ENCODE measurements at regions of chr2 and their contacts with region 1.

Region 1: DNA sequence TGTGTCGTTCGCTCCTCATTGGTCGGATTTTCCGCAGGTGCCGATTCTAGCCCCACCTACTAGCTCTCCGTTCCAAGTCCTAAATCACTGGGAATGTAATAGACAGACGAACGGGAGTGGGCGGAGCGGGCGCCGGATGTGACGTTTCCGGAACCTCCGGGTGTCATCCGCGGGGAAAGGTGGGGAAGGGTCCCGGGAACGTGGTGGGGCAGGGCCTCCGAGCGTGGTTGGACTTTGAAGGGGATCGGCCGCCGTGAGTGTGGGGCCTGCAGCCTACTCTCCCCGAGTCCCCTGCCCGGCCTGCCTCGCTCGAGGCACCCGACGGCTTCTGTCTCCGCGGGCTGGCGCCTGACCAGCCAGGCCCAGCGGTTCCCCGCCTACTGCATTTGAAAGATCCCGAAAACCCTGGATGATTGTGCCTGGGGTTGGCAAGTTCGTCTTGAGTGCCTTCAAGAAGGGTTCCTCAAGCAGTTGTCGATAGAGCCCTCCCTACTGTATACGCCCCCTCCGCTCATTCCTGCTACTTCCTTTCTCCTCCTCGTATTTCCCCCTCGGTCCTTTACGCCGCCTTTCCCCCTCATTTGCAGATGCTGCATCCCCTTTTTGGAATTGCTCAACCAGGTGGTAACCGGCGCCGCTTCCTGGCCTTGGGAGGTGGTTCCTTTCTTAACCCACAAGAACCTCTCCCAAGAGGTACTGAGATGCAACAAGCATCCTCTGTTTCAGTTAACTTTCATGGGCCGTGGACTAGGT is at the start of gene STAMBP:
- DNase-seq: peak; percentile 97 to 98
- H3K4me3 ChIP-seq: peak within 1 kb of the TSS; percentile 69 to 89 (median 85)
- H3K27ac ChIP-seq: peak within 1 kb of the TSS; percentile 83 to 87 (median 84)
- H3K4me1 ChIP-seq: peaks cover 11 to 15% of the 10 kb centered on the region in 2 donors
- H3K27me3 ChIP-seq: no peaks in the 10 kb centered on the region
- CTCF ChIP-seq: no peak
- POLR2A ChIP-seq: peak in 1 of 2 donors; percentile 73
- total RNA-seq, gene STAMBP: 31.9 to 45.2 (median 36.6) TPM

Region 2: DNA sequence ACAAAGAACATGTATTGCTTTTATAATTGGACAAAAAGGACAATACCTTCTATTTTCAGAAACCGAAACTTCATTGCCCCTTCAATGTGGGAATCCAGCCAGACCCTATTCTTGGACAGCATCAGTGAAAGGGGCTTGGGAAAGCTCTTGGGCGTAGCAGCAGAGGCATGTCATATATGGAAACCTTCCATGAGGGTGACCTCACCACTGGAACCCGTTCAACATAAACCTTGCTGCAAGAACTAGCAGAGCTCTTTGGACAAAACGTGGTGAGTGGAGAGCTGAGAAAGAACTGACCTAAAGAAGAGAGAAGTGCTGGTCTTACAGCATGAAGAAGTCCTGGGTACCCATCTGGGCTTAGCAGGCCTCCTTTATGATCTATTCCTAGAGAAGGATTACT is 41.1 kb after region 1 on chr2:
- intact Hi-C with region 1: no loop called
- DNase-seq: peak in 1 of 2 donors; percentile 5
- H3K4me3 ChIP-seq: no peak overlapping the region
- H3K27ac ChIP-seq: no peak overlapping the region
- H3K4me1 ChIP-seq: no peaks in the 10 kb centered on the region
- H3K27me3 ChIP-seq: no peaks in the 10 kb centered on the region
- CTCF ChIP-seq: no peak
- POLR2A ChIP-seq: no peak

Region 3: GRCh38 chr2:73985308-73986084 is 156.5 kb after region 1 on chr2:
- intact Hi-C with region 1: loop called (anchors 10 kb)
- DNase-seq: peak; percentile 24 to 46
- H3K4me3 ChIP-seq: peak overlapping the region in 1 of 3 donors; percentile 55
- H3K27ac ChIP-seq: peak overlapping the region in 2 of 3 donors; percentile 58 to 65
- H3K4me1 ChIP-seq: peaks cover 39 to 64% of the 10 kb centered on the region in 2 donors
- H3K27me3 ChIP-seq: no peaks in the 10 kb centered on the region
- CTCF ChIP-seq: no peak
- POLR2A ChIP-seq: peak in 1 of 2 donors; percentile 9

Region 4: GRCh38 chr2:74147727-74148456 is 318.9 kb after region 1 on chr2 and contains the start of gene BOLA3:
- intact Hi-C with region 1: loop called (anchors 10 kb)
- DNase-seq: peak; percentile 84 to 86
- H3K4me3 ChIP-seq: peak within 1 kb of the TSS; percentile 38 to 91 (median 68)
- H3K27ac ChIP-seq: peak within 1 kb of the TSS in 2 of 3 donors; percentile 33 to 36
- H3K4me1 ChIP-seq: peaks cover 16 to 21% of the 10 kb centered on the region in 2 donors
- H3K27me3 ChIP-seq: no peaks in the 10 kb centered on the region
- CTCF ChIP-seq: peak in 4 of 6 experiments; percentile 35 to 76 (median 64)
- POLR2A ChIP-seq: no peak
- total RNA-seq, gene BOLA3: 16.4 to 94.2 (median 78.6) TPM

Region 5: DNA sequence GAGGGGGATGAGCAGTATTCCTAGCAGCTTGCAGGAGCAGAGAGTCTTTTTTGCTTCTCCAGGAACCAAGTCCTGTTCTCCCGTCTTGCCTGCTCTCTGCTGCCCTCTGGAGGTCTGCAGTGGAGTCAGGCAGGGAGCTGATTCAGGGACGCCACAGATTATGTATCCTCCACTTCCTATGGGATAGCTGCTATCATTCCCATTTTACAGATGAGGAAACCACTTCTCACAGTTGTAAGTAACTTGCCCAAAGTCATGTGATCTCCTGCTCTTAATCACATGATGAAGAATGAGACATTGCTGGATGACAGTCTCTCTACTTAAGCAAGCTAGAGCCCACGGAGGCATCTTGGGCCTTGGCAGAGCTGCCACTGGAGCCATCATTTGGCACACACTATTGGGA is 505.9 kb after region 1 on chr2:
- intact Hi-C with region 1: loop called (anchors 10 kb)
- DNase-seq: peak; percentile 81 to 88
- H3K4me3 ChIP-seq: no peak overlapping the region
- H3K27ac ChIP-seq: no peak overlapping the region
- H3K4me1 ChIP-seq: peaks cover 0 to 8% of the 10 kb centered on the region in 2 donors
- H3K27me3 ChIP-seq: no peaks in the 10 kb centered on the region
- CTCF ChIP-seq: peak; percentile 82 to 96 (median 92)
- POLR2A ChIP-seq: no peak

Measured in thyroid gland (tissue), 4 donors.